ENCODE measurements at regions of chr9 and their contacts with region 1.

Region 1: DNA sequence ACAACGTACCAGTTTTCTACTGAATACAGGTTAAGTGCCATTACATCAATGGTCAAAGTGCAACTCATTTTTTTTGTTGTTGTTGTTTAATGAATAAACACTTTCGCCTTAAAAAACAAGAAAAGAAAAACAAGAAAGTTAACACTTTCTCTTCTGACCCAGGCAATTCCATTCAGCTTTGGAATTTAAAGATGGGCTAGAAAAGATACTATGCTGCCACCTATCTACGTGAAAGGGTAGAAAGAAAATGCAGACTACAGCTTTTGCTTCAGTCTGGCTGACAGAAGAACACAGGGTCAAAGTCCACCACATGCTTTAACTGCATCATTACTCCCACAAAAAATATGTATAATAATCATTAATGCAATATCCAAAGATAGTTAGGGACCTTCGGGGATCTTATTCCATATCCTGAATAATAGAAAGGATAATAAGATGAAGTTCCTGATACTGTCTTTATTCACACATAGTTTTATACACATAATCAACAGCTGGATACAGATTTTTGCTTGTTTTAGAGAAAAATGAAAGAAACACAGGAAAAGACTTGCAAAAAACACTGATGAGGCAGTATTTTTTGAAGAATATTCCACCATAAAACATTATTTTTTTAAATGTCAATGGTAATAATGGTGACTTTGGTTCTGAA is 40.4 kb downstream of the ZDHHC21 start:
- DNase-seq: no peak
- H3K4me3 Mint-ChIP-seq: no peak overlapping the region
- H3K27ac Mint-ChIP-seq: no peak overlapping the region
- H3K4me1 Mint-ChIP-seq: no peaks in the 10 kb centered on the region
- H3K27me3 Mint-ChIP-seq: no peaks in the 10 kb centered on the region

Region 2: GRCh38 chr9:14466429-14466818 is 186.4 kb before region 1 on chr9:
- CTCF ChIA-PET with region 1: no interaction called
- intact Hi-C with region 1: loop called (anchors 2 kb)
- DNase-seq: no peak
- H3K4me3 Mint-ChIP-seq: no peak overlapping the region
- H3K27ac Mint-ChIP-seq: no peak overlapping the region
- H3K4me1 Mint-ChIP-seq: no peaks in the 10 kb centered on the region
- H3K27me3 Mint-ChIP-seq: no peaks in the 10 kb centered on the region

Region 3: GRCh38 chr9:14616188-14616982 is 36.5 kb before region 1 on chr9:
- CTCF ChIA-PET with region 1: no interaction called
- intact Hi-C with region 1: loop called (anchors 2 kb)
- DNase-seq: no peak
- H3K4me3 Mint-ChIP-seq: no peak overlapping the region
- H3K27ac Mint-ChIP-seq: no peak overlapping the region
- H3K4me1 Mint-ChIP-seq: no peaks in the 10 kb centered on the region
- H3K27me3 Mint-ChIP-seq: no peaks in the 10 kb centered on the region

Region 4: DNA sequence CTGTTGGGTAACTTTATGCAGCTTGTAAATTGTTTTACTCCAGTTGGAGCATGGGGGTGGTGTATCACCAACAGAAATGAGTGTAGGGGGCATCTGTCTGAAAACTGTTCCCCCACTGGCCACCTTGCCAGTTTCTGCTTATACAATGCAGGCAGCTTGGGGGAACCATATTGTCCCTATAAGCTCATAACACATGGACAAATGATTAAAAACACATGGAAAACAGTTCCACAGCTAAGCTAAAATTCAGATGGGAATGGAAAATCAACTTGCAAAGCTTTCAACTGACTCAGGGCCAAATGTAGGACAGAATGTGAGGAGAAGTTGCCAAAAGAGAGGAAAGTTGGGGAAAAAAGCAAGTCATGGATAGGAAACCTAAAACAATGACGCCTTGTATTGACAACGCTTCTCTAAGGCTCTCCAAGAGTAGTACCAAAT is 77.6 kb after region 1 on chr9:
- CTCF ChIA-PET with region 1: no interaction called
- intact Hi-C with region 1: no loop called
- DNase-seq: no peak
- H3K4me3 Mint-ChIP-seq: no peak overlapping the region
- H3K27ac Mint-ChIP-seq: no peak overlapping the region
- H3K4me1 Mint-ChIP-seq: no peaks in the 10 kb centered on the region
- H3K27me3 Mint-ChIP-seq: peaks cover 6% of the 10 kb centered on the region